ENCODE measurements at regions of chr1 and their contacts with region 1.

Region 1: GRCh38 chr1:169348383-169349036 is 19.1 kb downstream of the NME7 start:
- DNase-seq: no peak
- H3K4me3 Mint-ChIP-seq: no peak overlapping the region
- H3K27ac Mint-ChIP-seq: no peak overlapping the region
- H3K4me1 Mint-ChIP-seq: peaks cover 16% of the 10 kb centered on the region
- H3K27me3 Mint-ChIP-seq: peaks cover 2% of the 10 kb centered on the region

Region 2: GRCh38 chr1:168603501-168604110 is 744.9 kb before region 1 on chr1:
- CTCF ChIA-PET with region 1: interaction called, 51 read pairs
- POLR2A ChIA-PET with region 1: interaction called, 3 read pairs
- DNase-seq: peak; percentile 76
- H3K4me3 Mint-ChIP-seq: no peak overlapping the region
- H3K27ac Mint-ChIP-seq: no peak overlapping the region
- H3K4me1 Mint-ChIP-seq: no peaks in the 10 kb centered on the region
- H3K27me3 Mint-ChIP-seq: peaks cover 6% of the 10 kb centered on the region

Region 3: GRCh38 chr1:168637350-168637991 is 711.0 kb before region 1 on chr1:
- CTCF ChIA-PET with region 1: interaction called, 13 read pairs
- POLR2A ChIA-PET with region 1: no interaction called
- DNase-seq: no peak
- H3K4me3 Mint-ChIP-seq: no peak overlapping the region
- H3K27ac Mint-ChIP-seq: no peak overlapping the region
- H3K4me1 Mint-ChIP-seq: no peaks in the 10 kb centered on the region
- H3K27me3 Mint-ChIP-seq: peaks cover 21% of the 10 kb centered on the region

Region 4: DNA sequence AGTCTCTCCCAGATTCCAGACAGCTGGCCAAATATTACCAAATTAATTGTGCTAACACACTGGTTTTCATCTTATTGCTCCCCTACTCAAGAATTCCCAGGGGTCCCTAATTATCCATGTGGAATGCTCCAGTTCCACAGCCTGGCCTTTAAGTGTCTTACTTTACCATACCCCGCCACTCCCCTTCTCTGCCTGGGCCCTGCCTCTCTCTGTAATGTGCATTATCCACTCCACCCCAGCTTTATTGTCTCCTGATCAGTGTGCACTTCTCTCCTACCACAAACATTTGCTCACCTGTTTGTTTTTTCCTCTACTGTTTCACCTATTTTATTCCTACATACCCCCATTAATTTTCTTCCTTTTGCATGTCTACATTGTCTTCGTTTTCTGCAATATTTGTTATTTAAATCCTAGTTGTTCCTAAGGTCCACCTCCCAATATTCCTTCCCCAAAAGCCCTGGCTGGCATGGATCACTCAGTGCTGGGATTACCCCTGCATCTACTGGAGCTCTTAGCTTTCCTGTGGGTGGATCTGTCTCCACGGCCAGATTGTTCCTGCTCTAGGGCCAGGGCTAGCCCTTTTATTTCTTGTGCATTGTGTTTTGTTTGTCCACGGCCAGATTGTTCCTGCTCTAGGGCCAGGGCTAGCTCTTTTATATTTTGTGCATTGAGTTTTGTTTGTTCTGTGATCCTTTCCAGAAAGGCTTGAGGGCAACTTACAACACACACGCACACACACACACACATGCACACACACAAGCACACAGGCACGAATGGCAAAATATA is 275.4 kb before region 1 on chr1:
- CTCF ChIA-PET with region 1: interaction called, 12 read pairs
- POLR2A ChIA-PET with region 1: no interaction called
- DNase-seq: no peak
- H3K4me3 Mint-ChIP-seq: no peak overlapping the region
- H3K27ac Mint-ChIP-seq: no peak overlapping the region
- H3K4me1 Mint-ChIP-seq: no peaks in the 10 kb centered on the region
- H3K27me3 Mint-ChIP-seq: peaks cover 3% of the 10 kb centered on the region

Region 5: GRCh38 chr1:169367486-169368405 is 19.2 kb after region 1 on chr1 and contains the starts of genes BLZF1 and NME7:
- CTCF ChIA-PET with region 1: interaction called, 20 read pairs
- POLR2A ChIA-PET with region 1: interaction called, 5 read pairs
- DNase-seq: peak; percentile 99
- H3K4me3 Mint-ChIP-seq: no peak within 1 kb of the TSS
- H3K27ac Mint-ChIP-seq: no peak within 1 kb of the TSS
- H3K4me1 Mint-ChIP-seq: peaks cover 39% of the 10 kb centered on the region
- H3K27me3 Mint-ChIP-seq: no peaks in the 10 kb centered on the region
- total RNA-seq, gene BLZF1: 48.1 to 49.3 TPM
- total RNA-seq, gene NME7: 26.1 to 28.3 TPM